Transverse colon (tissue), 4 donors: ENCODE measurements at regions of chr20 and their contacts with region 1.

Region 1: DNA sequence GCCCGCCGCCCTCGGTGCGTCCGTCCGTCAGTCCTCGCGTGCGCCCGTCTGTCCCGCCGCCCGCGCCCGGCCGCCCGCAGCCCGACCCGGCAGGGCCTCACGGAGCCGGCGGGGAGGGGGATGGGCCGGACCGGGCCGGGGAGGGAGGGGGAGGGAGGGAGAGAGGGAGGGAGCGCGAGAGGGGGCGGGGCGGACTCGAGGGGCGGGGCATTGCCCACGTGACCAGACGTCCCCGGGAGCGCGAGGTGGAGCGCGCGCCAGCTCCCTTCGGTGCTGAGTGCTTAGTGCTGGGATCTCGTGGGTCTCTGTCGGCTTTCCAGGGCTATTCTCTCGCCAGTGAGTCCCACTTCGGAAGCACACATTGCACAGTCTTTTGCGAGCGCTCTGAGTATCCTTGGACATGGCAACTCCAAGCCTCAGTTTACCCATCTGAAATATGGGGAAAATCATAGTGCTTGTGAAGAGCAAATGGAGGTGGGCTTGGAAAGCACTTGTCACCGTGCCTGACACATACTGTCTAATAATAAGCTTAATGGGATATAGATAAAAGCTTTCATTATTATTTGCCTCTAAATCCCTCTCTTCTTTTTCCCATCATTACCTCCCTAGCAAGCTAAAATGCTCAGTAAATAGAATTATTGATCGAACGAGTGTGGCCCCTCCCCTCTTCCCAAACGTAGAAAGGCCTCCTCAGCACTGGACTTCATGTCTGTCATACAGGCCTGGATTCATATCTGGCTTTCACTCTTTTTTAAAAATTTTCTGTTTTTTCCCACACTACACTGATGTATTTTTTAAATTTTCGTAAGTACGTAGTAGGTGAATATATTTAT is at the start of gene NCOA6:
- DNase-seq: peak; percentile 91
- H3K4me3 ChIP-seq: peak within 1 kb of the TSS; percentile 92 to 98 (median 96)
- H3K27ac ChIP-seq: peak within 1 kb of the TSS; percentile 93 to 97 (median 94)
- H3K4me1 ChIP-seq: peaks cover 0 to 43% (median 30%) of the 10 kb centered on the region in 4 donors
- H3K27me3 ChIP-seq: no peaks in the 10 kb centered on the region
- CTCF ChIP-seq: no peak
- EP300 ChIP-seq: no peak
- POLR2A ChIP-seq: no peak
- total RNA-seq, gene NCOA6: 34.8 to 81.8 (median 44.2) TPM

Region 2: DNA sequence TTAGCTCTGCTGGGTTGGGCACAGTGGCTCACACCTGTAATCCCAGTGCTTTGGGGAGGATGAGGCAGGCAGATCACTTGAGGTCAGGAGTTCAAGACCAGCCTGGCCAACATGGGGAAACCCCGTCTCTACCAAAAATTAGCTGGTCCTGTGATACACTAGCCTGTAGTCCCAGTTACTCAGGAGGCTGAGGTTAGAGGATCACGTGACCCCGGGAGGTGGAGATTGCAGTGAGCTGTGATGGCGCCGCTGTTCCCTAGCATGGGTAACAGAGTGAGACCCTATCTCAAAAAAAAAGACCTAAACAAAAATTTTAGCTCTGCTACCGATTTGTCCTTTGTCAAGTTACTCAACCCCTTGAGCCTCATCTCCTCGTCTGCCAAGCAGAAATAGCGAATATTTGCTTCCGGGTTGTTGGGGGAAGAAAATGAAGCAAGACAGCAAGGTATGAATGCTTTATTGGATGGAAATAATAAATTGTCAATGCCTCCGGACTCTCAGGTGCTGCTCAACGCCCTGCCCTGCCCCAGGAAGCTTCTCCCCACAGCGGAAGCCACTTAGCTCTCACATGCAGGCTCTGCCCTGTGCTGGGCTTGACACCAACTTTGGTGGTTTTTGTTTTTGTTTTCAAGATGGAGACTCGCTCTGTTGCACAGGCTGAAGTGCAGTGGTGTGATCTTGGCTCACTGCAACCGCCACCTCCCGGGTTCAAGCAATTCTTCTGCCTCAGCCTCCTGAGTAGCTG is 487.6 kb before region 1 on chr20:
- in situ Hi-C with region 1: no loop called
- intact Hi-C with region 1: no loop called
- DNase-seq: peak; percentile 37
- H3K4me3 ChIP-seq: no peak overlapping the region
- H3K27ac ChIP-seq: no peak overlapping the region
- H3K4me1 ChIP-seq: peaks cover 0 to 15% (median 4%) of the 10 kb centered on the region in 4 donors
- H3K27me3 ChIP-seq: no peaks in the 10 kb centered on the region
- CTCF ChIP-seq: no peak
- EP300 ChIP-seq: no peak
- POLR2A ChIP-seq: no peak

Region 3: DNA sequence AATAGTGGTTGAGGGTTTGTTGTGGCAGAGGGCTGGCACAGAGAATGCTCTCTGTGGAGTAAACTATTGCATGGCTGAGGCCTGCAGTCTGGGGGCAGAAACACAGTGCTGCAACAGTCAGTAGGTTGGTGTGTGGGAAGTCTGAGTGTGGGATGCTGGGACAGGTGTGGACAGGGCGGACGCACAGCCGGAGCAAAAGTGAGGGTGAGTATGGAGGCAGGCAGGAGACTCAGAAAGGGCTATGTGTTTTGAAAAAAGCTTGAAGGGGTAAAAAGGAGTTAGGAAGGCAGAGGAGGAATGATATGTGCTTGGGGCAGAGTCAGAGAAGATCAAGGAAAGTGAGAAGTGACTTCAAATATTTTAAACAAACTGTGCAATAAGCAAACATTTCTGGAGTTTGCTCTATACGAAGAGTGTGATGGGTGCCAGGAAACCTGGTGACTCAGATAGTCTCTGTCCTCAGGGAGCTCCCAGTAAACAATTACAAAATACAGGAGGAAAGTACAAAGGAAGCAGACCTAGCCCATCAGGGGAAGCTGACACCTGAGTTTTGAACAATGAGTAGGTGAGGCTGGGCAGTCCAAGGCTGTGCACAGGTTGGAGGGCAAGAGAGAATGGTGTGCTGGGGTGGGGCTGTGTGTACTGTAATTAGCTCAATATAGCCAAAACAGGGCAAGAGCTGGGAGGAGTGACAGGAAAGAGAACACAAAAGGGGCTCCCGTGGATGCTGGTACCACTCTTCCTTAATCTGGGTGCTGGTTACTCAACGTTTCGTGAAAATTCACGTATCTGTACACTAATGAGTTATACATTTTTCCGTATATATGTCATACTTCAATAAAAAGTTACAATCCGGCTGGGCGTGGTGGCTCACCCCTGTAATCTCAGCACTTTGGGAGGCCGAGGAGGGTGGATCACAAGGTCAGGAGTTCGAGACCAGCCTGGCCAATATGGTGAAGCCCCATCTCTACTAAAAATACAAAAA is 204.1 kb before region 1 on chr20:
- in situ Hi-C with region 1: no loop called
- intact Hi-C with region 1: no loop called
- DNase-seq: peak; percentile 58
- H3K4me3 ChIP-seq: no peak overlapping the region
- H3K27ac ChIP-seq: peak overlapping the region; percentile 42 to 68 (median 60)
- H3K4me1 ChIP-seq: peaks cover 0 to 18% (median 3%) of the 10 kb centered on the region in 4 donors
- H3K27me3 ChIP-seq: no peaks in the 10 kb centered on the region
- CTCF ChIP-seq: no peak
- EP300 ChIP-seq: no peak
- POLR2A ChIP-seq: no peak

Region 4: GRCh38 chr20:35092524-35093266 is 266.9 kb after region 1 on chr20 and contains the start of gene TRPC4AP:
- in situ Hi-C with region 1: loop called in 1 of 4 experiments (anchors 25 kb)
- intact Hi-C with region 1: no loop called
- DNase-seq: peak; percentile 91
- H3K4me3 ChIP-seq: peak within 1 kb of the TSS; percentile 80 to 89 (median 81)
- H3K27ac ChIP-seq: peak within 1 kb of the TSS; percentile 93 to 95 (median 93)
- H3K4me1 ChIP-seq: peaks cover 17 to 45% (median 28%) of the 10 kb centered on the region in 4 donors
- H3K27me3 ChIP-seq: no peaks in the 10 kb centered on the region
- CTCF ChIP-seq: peak; percentile 96 to 99 (median 98)
- EP300 ChIP-seq: no peak
- POLR2A ChIP-seq: peak; percentile 77
- total RNA-seq, gene TRPC4AP: 57.3 to 85.3 (median 70.1) TPM

Region 5: GRCh38 chr20:35207950-35208611 is 382.3 kb after region 1 on chr20:
- in situ Hi-C with region 1: loop called in 1 of 4 experiments (anchors 25 kb)
- intact Hi-C with region 1: no loop called
- DNase-seq: peak; percentile 86
- H3K4me3 ChIP-seq: peak overlapping the region in 1 of 4 donors; percentile 22
- H3K27ac ChIP-seq: peak overlapping the region; percentile 58 to 83 (median 74)
- H3K4me1 ChIP-seq: peaks cover 3 to 13% (median 8%) of the 10 kb centered on the region in 4 donors
- H3K27me3 ChIP-seq: no peaks in the 10 kb centered on the region
- CTCF ChIP-seq: peak; percentile 71 to 89 (median 78)
- EP300 ChIP-seq: no peak
- POLR2A ChIP-seq: no peak

Region 6: GRCh38 chr20:35269055-35269781 is 443.5 kb after region 1 on chr20:
- in situ Hi-C with region 1: loop called in 1 of 4 experiments (anchors 25 kb)
- intact Hi-C with region 1: no loop called
- DNase-seq: peak; percentile 65
- H3K4me3 ChIP-seq: no peak overlapping the region
- H3K27ac ChIP-seq: peak overlapping the region in 3 of 4 donors; percentile 1 to 25 (median 8)
- H3K4me1 ChIP-seq: peaks cover 0 to 15% (median 4%) of the 10 kb centered on the region in 4 donors
- H3K27me3 ChIP-seq: no peaks in the 10 kb centered on the region
- CTCF ChIP-seq: peak; percentile 65 to 75 (median 69)
- EP300 ChIP-seq: no peak
- POLR2A ChIP-seq: no peak